HepG2 (cell line): ENCODE measurements at regions of chr7 and their contacts with region 1.

Region 1: GRCh38 chr7:18352339-18353255 is 143.0 kb upstream of the HDAC9 start:
- DNase-seq: peak; percentile 5
- ATAC-seq: peak; percentile 54; the same call in 2 of the 3 replicates
- H3K4me3 ChIP-seq: no peak overlapping the region
- H3K27ac ChIP-seq: no peak overlapping the region
- H3K4me1 ChIP-seq: no peaks in the 10 kb centered on the region
- H3K27me3 ChIP-seq: no peaks in the 10 kb centered on the region
- CTCF ChIP-seq: peak; percentile 45
- EP300 ChIP-seq: no peak
- POLR2A ChIP-seq: no peak
- RAD21 ChIP-seq: no peak

Region 2: GRCh38 chr7:18445916-18446520 is 93.4 kb after region 1 on chr7:
- CTCF ChIA-PET with region 1: no interaction called
- POLR2A ChIA-PET with region 1: no interaction called
- in situ Hi-C with region 1: no loop called
- intact Hi-C with region 1: no loop called
- DNase-seq: no peak
- ATAC-seq: no peak
- H3K4me3 ChIP-seq: no peak overlapping the region
- H3K27ac ChIP-seq: no peak overlapping the region
- H3K4me1 ChIP-seq: no peaks in the 10 kb centered on the region
- H3K27me3 ChIP-seq: no peaks in the 10 kb centered on the region
- CTCF ChIP-seq: no peak
- EP300 ChIP-seq: no peak
- POLR2A ChIP-seq: no peak
- RAD21 ChIP-seq: no peak

Region 3: GRCh38 chr7:18570890-18571478 is 218.4 kb after region 1 on chr7:
- CTCF ChIA-PET with region 1: interaction called, 3 read pairs
- POLR2A ChIA-PET with region 1: no interaction called
- in situ Hi-C with region 1: no loop called
- intact Hi-C with region 1: loop called (anchors 1 kb)
- DNase-seq: peak; percentile 13
- ATAC-seq: no peak
- H3K4me3 ChIP-seq: no peak overlapping the region
- H3K27ac ChIP-seq: no peak overlapping the region
- H3K4me1 ChIP-seq: no peaks in the 10 kb centered on the region
- H3K27me3 ChIP-seq: no peaks in the 10 kb centered on the region; a peak in 2 of 5 replicates
- CTCF ChIP-seq: no peak; the same call in 1 of the 2 replicates
- EP300 ChIP-seq: no peak
- POLR2A ChIP-seq: no peak
- RAD21 ChIP-seq: no peak

Region 4: GRCh38 chr7:18666107-18666728 is 313.6 kb after region 1 on chr7:
- CTCF ChIA-PET with region 1: no interaction called
- POLR2A ChIA-PET with region 1: no interaction called
- in situ Hi-C with region 1: no loop called
- intact Hi-C with region 1: loop called (anchors 1 kb)
- DNase-seq: peak; percentile 28
- ATAC-seq: peak; percentile 84
- H3K4me3 ChIP-seq: no peak overlapping the region
- H3K27ac ChIP-seq: no peak overlapping the region
- H3K4me1 ChIP-seq: no peaks in the 10 kb centered on the region
- H3K27me3 ChIP-seq: no peaks in the 10 kb centered on the region
- CTCF ChIP-seq: peak; percentile 76
- EP300 ChIP-seq: no peak
- POLR2A ChIP-seq: no peak
- RAD21 ChIP-seq: no peak

Region 5: DNA sequence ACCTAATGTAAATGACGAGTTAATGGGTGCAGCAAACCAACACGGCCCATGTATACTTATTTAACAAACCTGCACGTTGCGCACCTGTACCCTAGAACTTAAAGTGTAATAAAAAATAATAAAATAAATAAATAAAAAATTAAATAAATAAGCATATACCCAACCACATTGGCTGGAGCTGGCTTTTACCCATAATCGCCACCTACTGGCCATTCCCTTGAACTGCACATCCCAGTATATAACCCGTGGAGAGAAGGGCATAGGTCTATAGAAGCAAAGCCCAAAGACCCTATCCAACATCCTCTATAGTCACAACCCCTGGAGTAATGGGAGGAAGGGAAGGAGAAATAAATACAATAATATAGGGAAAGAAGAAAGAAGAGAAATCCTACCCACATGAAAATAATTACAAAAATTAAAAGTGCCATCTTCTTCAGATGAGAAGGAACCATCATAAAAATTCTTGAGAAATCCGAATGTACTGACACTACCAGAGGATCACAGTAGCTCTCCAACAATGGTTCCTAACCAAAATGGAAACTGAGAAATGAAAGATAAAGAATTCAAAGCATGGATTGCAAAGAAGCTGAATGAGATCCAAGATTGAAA is 699.3 kb after region 1 on chr7:
- CTCF ChIA-PET with region 1: no interaction called
- POLR2A ChIA-PET with region 1: no interaction called
- in situ Hi-C with region 1: no loop called
- intact Hi-C with region 1: loop called (anchors 5 kb)
- DNase-seq: peak; percentile 5
- ATAC-seq: peak; percentile 46; the same call in 1 of the 3 replicates
- H3K4me3 ChIP-seq: no peak overlapping the region
- H3K27ac ChIP-seq: no peak overlapping the region
- H3K4me1 ChIP-seq: no peaks in the 10 kb centered on the region
- H3K27me3 ChIP-seq: no peaks in the 10 kb centered on the region
- CTCF ChIP-seq: peak; percentile 29; the same call in 1 of the 2 replicates
- EP300 ChIP-seq: no peak
- POLR2A ChIP-seq: no peak
- RAD21 ChIP-seq: no peak

Region 6: GRCh38 chr7:19362099-19362498 is 1009.5 kb after region 1 on chr7:
- CTCF ChIA-PET with region 1: no interaction called
- POLR2A ChIA-PET with region 1: no interaction called
- in situ Hi-C with region 1: no loop called
- intact Hi-C with region 1: no loop called
- DNase-seq: no peak
- ATAC-seq: no peak
- H3K4me3 ChIP-seq: no peak overlapping the region
- H3K27ac ChIP-seq: no peak overlapping the region
- H3K4me1 ChIP-seq: no peaks in the 10 kb centered on the region
- H3K27me3 ChIP-seq: no peaks in the 10 kb centered on the region
- CTCF ChIP-seq: no peak
- EP300 ChIP-seq: no peak
- POLR2A ChIP-seq: no peak
- RAD21 ChIP-seq: no peak

Region 7: GRCh38 chr7:19665399-19666008 is 1312.9 kb after region 1 on chr7:
- CTCF ChIA-PET with region 1: interaction called, 3 read pairs
- POLR2A ChIA-PET with region 1: no interaction called
- in situ Hi-C with region 1: loop called (anchors 25 kb)
- intact Hi-C with region 1: loop called (anchors 5 kb)
- DNase-seq: peak; percentile 7
- ATAC-seq: 0 out of 3 replicates have a peak, but pooled peaks have one; percentile 24
- H3K4me3 ChIP-seq: no peak overlapping the region
- H3K27ac ChIP-seq: no peak overlapping the region
- H3K4me1 ChIP-seq: no peaks in the 10 kb centered on the region
- H3K27me3 ChIP-seq: no peaks in the 10 kb centered on the region
- CTCF ChIP-seq: peak; percentile 43; the same call in 1 of the 2 replicates
- EP300 ChIP-seq: no peak
- POLR2A ChIP-seq: no peak
- RAD21 ChIP-seq: no peak